PC-9 (cell line): ENCODE measurements at regions of chr11 and their contacts with region 1.

Region 1: DNA sequence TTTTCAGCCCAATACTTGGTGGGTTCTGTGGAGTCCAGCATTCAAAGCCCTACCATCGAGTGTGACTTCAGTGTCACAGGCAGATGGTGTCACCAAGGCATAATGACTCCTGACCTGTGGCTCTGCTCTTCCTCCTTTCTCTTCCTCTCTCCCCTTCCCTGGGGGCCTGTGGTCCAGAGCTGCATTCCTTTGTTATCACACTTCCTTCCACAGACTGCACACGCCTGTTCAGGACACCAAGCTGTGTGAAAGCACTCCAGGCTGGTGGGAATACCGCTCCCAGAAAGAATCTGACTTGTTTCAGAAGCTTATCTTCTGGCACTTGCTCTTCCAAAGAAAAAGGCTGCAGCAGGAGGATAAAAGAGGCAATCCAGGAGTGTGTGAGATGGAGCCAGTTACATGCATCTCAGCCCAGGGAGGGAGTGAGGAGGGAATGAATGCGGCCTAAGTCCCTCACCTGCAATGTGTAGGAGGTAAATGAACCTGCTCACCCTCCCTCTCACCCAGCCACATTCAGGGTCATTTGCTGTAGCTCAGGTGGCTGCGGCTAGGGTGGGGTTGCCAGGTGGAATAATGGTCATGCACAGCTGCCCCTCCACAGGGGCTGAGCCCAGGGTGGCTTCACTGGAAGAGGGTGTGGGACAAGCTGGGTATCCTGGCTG is 79.3 kb downstream of the ADAMTS15 start:
- DNase-seq: peak; percentile 50 to 70
- H3K4me3 ChIP-seq: no peak overlapping the region
- H3K27ac ChIP-seq: peak overlapping the region; percentile 55
- H3K4me1 ChIP-seq: peaks cover 48% of the 10 kb centered on the region
- H3K27me3 ChIP-seq: no peaks in the 10 kb centered on the region
- CTCF ChIP-seq: no peak

Region 2: DNA sequence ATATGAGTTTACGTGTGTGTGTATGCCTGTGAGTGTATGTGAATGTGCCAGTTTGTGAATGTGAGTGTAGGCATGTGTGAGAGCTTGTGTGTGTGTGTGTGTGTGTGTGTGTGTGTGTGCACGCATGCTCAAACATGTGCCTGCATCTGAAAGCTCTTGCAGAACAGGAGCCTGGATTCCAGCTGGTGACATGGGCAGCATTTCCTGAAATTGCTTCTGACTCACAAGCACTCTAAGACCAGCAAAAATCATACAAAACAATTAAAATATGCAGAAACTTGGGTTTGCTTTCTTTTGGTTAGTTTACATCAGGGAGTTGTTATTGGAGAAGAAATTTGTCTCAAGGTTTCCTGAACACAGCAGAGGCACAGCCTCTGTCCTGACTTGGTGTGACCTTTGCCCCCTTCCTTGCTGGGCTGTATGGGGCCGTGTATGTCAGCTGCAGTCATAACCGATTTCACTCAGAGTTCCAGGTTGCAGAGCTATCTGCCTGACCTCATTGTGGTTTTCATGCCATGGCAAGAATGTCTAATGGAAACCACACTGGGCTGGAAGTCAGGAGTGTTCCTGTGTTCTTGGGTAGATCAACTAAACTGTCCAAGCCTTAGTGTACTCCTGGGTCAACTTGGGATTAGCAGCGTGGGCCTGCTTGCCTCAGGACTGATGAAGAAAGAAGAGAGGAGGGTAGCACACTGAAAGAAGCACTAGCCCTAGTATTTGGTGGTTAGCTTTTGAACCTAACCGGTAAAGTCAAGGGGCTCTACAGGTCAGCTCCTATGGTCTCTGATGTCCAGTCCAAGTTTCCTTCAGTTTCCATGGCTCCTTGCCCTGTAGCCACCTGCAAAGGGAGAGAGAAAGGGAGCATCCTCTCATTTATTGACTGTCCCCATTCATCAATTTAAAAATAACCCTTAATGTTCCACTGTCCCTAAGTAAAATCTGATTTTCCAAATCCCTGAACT is 244.8 kb after region 1 on chr11:
- CTCF ChIA-PET with region 1: no interaction called
- POLR2A ChIA-PET with region 1: no interaction called
- intact Hi-C with region 1: loop called (anchors 5 kb)
- DNase-seq: peak; percentile 59 to 71
- H3K4me3 ChIP-seq: no peak overlapping the region
- H3K27ac ChIP-seq: peak overlapping the region; percentile 3; the same call in 1 of the 2 replicates
- H3K4me1 ChIP-seq: peaks cover 31% of the 10 kb centered on the region
- H3K27me3 ChIP-seq: no peaks in the 10 kb centered on the region
- CTCF ChIP-seq: no peak